Psoas muscle (tissue), 8 donors: ENCODE measurements at regions of chr12 and their contacts with region 1.

Region 1: DNA sequence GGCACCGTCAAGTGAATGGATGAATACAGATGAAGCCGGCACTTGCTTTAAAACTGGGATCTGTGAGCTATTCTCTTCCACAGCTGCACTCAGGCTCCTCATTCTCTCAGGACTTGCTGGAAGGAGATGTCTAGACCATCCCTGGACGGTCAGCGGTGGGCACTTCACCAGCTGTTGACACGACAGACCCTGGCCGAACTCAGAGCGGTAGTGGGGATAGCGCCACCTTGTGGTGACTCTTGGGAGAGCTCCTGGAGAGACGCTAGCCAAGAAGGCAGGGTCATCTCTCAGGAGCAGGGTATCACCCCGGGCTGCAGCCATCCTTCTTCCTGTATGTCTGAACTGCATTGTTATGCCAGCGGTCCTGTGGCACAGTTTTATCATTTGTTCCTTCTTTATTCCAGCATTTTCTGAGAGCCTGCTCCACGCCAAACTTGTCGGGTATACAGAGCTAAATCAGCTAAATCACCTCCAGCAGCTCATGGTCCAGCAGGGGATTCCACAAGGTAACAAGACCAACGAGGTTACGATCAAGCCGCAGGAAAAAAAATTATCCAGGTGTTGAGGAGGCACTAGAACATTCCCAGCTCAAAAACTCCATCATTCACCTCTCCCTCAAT is 10.0 kb downstream of the WNT1 start:
- DNase-seq: peak; percentile 67 to 84
- ATAC-seq: peak; percentile 67 to 82 (median 74)
- H3K4me3 ChIP-seq: no peak overlapping the region
- H3K27ac ChIP-seq: no peak overlapping the region
- H3K4me1 ChIP-seq: peaks cover 6% of the 10 kb centered on the region
- H3K27me3 ChIP-seq: peaks cover 0 to 32% (median 0%) of the 10 kb centered on the region in 3 donors
- CTCF ChIP-seq: peak; percentile 83

Region 2: DNA sequence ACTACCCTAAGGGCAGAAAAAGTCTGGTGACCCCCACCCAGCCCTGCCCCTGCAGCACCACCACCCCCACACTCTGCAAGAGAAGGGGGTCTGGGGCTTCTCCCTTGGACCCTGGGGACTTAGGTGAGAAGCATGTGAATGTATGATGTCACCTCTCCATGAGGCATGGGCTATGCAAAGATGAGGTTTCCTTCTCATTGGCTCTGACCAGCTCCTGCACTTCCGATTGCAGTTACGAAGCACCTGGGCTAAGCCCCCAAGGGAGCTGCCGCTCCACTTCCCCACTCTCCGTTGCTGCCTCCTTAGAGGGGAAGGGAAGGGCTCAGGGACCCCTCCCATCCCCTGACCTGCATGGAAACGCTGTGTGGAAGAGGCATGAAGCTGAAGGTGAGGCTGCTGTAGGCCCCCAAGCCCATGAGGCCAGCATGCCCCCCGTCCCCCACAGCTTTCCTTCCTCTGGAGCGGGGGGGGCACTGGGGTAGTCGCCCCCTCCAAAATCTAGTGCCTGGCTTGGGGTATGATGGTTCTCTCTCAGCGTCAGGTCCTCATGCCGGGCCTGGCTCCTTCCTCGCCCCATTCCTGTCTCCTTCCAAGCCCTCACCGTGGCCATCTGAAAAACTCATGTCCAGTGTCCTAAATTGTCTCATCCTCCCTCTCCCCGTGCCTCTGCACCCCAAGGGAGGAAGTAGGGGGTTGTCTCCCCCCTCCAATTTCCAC is 130.7 kb before region 1 on chr12:
- intact Hi-C with region 1: loop called in 1 of 2 experiments (anchors 5 kb)
- DNase-seq: no peak
- ATAC-seq: no peak
- H3K4me3 ChIP-seq: no peak overlapping the region
- H3K27ac ChIP-seq: no peak overlapping the region
- H3K4me1 ChIP-seq: peaks cover 3% of the 10 kb centered on the region
- H3K27me3 ChIP-seq: peaks cover 0 to 2% (median 0%) of the 10 kb centered on the region in 3 donors
- CTCF ChIP-seq: no peak

Region 3: DNA sequence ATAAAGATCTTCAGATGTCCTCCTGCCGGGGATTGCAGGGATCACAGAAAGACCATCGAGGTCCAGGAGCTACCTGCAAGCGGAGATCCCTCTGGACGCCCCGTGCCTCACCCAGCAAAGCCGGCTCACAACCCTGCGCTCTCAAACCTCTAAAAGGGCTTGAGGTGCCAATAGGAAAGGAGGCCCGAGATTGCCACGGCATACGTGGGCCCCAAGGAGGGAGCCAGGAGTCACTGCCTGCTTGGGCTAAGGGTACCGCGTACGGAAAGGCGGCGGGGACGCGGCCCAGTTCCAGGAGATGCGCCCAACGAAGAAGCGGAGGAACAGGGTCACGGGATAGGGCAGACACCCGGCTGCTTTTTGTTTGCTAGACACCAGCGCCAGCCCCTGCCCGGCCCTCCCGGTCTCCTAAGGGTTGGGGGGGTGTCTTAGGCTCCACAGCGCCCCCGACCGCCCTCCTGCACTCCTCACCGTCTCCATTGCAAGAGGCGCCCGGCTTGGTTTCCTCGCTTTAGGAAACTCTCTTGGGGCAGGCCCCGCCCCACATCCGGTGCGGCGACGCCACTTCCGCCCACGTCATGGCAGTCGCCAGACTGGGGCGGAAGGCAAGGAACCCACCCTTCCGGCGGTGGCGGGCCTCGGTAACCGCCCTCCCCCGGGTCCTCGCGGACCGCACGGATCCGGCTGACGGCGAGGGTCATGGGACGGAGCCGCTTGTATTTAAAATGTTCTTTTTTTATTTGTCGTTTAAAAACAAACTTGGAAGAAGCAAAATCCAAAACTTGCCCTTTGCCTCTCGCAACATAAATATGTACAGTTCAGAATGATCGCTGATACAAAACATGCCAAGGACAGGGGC is 30.4 kb after region 1 on chr12 and contains the start of gene PRKAG1:
- intact Hi-C with region 1: no loop called
- DNase-seq: peak; percentile 96 to 98
- ATAC-seq: peak; percentile 89 to 93 (median 90)
- H3K4me3 ChIP-seq: peak within 1 kb of the TSS; percentile 88
- H3K27ac ChIP-seq: peak within 1 kb of the TSS; percentile 96
- H3K4me1 ChIP-seq: peaks cover 36% of the 10 kb centered on the region
- H3K27me3 ChIP-seq: no peaks in the 10 kb centered on the region
- CTCF ChIP-seq: peak; percentile 42
- total RNA-seq, gene PRKAG1: 49.5 to 91.6 (median 70.6) TPM